ENCODE measurements at regions of chr1 and their contacts with region 1.

Region 1: GRCh38 chr1:99956755-99957154 is 13.0 kb upstream of the SLC35A3 start:
- DNase-seq: no peak
- ATAC-seq: peak in 1 of 4 donors; percentile 34
- H3K4me3 ChIP-seq: no peak overlapping the region
- H3K27ac ChIP-seq: no peak overlapping the region
- H3K4me1 ChIP-seq: no peaks in the 10 kb centered on the region
- H3K27me3 ChIP-seq: no peaks in the 10 kb centered on the region
- CTCF ChIP-seq: no peak
- POLR2A ChIP-seq: no peak

Region 2: GRCh38 chr1:99943223-99943794 is 13.4 kb before region 1 on chr1:
- intact Hi-C with region 1: loop called in 1 of 10 experiments (anchors 1 kb)
- DNase-seq: no peak
- ATAC-seq: no peak
- H3K4me3 ChIP-seq: no peak overlapping the region
- H3K27ac ChIP-seq: no peak overlapping the region
- H3K4me1 ChIP-seq: peaks cover 0 to 10% (median 0%) of the 10 kb centered on the region in 12 donors
- H3K27me3 ChIP-seq: no peaks in the 10 kb centered on the region
- CTCF ChIP-seq: no peak
- POLR2A ChIP-seq: no peak

Region 3: GRCh38 chr1:99986656-99987225 is 30.0 kb after region 1 on chr1:
- intact Hi-C with region 1: no loop called
- DNase-seq: no peak
- ATAC-seq: no peak
- H3K4me3 ChIP-seq: no peak overlapping the region
- H3K27ac ChIP-seq: peak overlapping the region in 2 of 12 donors; percentile 29 to 33
- H3K4me1 ChIP-seq: peaks cover 0 to 11% (median 2%) of the 10 kb centered on the region in 12 donors
- H3K27me3 ChIP-seq: no peaks in the 10 kb centered on the region
- CTCF ChIP-seq: no peak
- POLR2A ChIP-seq: no peak

Measured in heart left ventricle (tissue), 16 donors.